AG04449 (cell line): ENCODE measurements at regions of chr20 and their contacts with region 1.

Region 1: DNA sequence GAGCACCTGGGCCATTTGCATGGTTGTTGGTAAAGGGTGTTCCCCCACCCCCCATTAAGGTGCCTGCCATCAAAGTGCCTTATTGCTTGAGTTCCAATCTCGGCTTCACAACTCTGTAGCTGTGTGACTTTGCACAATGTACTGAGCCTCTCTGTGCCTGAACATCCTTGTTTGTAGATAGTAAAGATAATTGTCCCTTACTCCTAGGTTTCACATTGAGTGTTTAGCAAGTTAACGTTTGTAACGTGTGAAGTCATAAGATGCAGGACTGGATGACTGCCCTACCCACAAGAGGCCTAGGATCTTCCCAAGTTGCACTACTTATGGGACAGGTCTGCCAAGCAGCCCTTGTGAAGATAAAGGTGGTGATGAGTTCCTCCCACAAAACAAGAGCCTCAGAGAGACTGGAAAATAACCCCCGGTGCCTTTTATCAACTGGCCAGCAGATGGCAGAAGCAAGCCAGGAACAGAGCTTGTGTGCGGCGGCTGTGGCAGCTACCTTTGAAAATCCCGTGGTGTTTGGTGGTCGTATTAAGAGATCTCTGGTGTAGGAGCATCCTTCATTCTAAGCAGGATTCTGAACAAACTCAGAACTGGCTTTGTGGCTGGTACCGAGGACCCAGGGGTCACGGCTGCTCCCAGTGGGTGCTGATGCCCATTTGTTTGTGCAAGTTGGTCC is 99.0 kb downstream of the CDH26 start:
- DNase-seq: no peak
- H3K4me3 ChIP-seq: no peak overlapping the region
- CTCF ChIP-seq: peak; percentile 75

Region 2: DNA sequence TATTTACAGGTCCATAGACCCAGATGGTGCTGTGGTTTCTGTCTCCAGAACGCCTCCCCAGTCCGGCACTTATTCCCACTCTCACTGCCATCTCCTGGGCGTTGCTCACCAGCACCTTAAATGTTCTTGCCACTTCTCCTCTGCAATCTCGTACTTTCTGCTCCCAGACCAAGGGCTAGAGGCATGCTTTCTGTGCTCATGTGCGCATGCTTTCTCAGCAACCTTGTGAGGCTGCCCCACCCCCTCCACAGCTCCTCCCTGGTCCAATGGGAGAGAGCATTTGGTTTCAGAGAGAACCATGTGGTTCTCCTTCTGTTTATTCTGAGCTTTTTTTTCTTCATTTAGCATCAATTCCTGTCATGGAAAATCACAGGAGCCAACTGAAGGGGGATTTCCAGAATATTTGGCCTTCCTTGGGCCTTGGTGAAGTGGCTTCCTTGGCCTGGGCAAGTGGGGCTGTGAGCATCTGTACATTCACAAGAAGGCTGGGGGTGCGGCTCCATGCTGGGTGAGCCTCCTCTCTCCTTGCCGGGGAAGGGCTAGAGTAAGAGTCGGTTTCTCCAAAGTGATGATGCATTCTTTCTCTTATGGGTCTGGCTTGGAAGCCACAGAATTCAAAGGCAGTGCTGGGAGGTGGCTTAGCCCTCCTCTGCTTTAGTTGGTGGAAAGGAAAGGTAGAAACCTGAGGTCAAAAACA is 386.3 kb before region 1 on chr20:
- CTCF ChIA-PET with region 1: no interaction called
- POLR2A ChIA-PET with region 1: no interaction called
- DNase-seq: no peak
- H3K4me3 ChIP-seq: no peak overlapping the region
- CTCF ChIP-seq: no peak

Region 3: DNA sequence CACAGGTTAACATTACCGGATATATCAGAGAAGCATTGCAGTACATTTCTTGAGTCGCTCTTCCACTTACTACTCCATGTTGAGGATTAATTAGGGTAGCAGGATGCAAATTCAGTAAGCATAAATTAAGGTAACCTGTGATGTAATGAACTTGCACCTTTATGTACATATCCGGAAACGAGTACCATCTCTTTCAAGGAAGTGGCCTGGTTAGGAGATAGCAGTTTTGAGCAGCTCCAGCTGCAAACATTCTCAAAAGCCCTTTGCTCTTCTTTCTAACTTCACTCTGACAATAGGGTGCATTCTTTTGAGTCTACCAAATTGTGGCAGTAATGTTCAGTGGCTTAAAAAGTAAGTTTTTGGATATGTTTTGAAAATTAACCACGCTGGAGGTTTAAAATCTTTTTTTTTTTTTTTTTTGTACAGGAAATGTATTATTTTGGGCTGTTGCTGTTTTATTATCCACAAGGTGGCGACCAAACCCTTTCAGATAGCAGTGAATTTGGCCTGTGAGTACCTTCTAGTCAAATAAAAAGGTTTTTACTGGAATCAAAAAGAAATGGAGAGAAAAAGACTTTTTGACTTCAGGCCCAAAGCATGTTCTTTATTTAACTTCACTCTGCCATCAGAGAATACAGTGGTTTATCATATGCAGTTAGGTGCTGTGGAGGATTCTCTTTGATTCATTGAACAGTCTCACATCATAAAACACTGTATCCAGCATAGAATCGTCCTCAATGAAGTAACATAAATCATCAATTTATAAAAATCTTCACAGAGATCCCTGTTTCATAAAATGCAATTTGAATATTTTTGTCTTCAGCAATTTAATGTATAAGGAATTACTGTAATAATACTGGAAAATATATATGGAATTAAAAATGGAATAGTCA is 108.2 kb before region 1 on chr20:
- CTCF ChIA-PET with region 1: interaction called, 13 read pairs
- POLR2A ChIA-PET with region 1: no interaction called
- DNase-seq: no peak
- H3K4me3 ChIP-seq: no peak overlapping the region
- CTCF ChIP-seq: peak; percentile 44

Region 4: DNA sequence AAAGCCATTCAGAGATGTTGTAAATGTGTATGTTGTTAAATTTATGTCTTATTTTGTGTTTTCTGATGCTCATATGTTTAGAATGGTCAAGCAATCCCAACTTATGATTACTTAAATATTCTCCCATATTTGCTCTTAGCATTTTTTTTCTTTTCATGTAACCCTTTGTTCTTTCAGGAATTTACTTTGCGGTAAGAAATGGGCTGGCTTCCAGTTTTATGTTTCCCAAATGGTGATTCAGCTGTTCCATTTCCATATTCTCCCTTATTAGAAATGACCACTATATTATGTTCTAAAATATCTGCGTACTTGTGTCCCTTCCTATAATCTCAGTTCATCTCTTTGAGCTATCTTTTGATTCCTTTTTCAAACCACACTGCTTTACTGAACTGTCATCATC is 14.7 kb after region 1 on chr20:
- CTCF ChIA-PET with region 1: interaction called, 31 read pairs
- POLR2A ChIA-PET with region 1: no interaction called
- DNase-seq: no peak
- H3K4me3 ChIP-seq: no peak overlapping the region
- CTCF ChIP-seq: no peak

Region 5: GRCh38 chr20:60262967-60263603 is 205.8 kb after region 1 on chr20:
- CTCF ChIA-PET with region 1: interaction called, 38 read pairs
- POLR2A ChIA-PET with region 1: no interaction called
- DNase-seq: no peak
- H3K4me3 ChIP-seq: no peak overlapping the region
- CTCF ChIP-seq: peak; percentile 75

Region 6: GRCh38 chr20:61263084-61263695 is 1205.9 kb after region 1 on chr20:
- CTCF ChIA-PET with region 1: interaction called, 21 read pairs
- POLR2A ChIA-PET with region 1: no interaction called
- DNase-seq: no peak
- H3K4me3 ChIP-seq: no peak overlapping the region
- CTCF ChIP-seq: peak; percentile 80